Motor neuron (in vitro differentiated cells): ENCODE measurements at regions of chr17 and their contacts with region 1.

Region 1: DNA sequence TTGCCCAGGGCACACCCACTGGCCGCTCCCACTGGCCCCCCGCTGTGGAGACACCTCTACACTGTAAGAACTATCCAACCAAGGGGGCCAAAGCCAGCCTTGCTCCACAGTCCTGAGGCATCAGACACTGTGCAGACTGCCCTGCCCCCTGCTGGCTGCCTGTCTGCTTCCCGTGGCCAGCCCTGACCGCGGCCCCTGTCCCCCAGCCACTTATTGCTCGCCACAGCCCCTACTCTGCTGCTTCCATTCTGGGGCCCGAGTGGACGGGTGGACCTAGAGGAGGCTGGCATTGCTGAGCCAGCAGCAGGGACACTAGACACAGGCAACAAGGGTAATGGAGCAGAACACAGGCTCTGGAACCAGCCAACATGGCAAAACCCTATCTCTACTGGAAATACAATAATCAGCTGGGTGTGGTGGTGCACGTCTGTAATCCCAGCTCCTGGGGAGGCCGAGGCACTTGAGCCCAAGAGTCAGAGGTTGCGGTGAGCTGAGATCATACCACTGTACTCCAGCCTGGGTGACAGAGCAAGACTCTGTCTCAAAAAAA is 19.7 kb upstream of the LRRC37A3 start:
- ATAC-seq: peak in 4 of 8 experiments; percentile 56 to 86 (median 74)
- H3K4me3 ChIP-seq: no peak overlapping the region
- H3K27ac ChIP-seq: no peak overlapping the region
- H3K4me1 ChIP-seq: no peaks in the 10 kb centered on the region

Region 2: GRCh38 chr17:65198653-65199382 is 259.8 kb after region 1 on chr17:
- in situ Hi-C with region 1: loop called in 1 of 9 experiments (anchors 25 kb)
- ATAC-seq: peak; percentile 48 to 87 (median 65)
- H3K4me3 ChIP-seq: no peak overlapping the region
- H3K27ac ChIP-seq: no peak overlapping the region
- H3K4me1 ChIP-seq: peaks cover 0 to 3% of the 10 kb centered on the region in 2 donors